ENCODE measurements at regions of chr2 and their contacts with region 1.

Region 1: DNA sequence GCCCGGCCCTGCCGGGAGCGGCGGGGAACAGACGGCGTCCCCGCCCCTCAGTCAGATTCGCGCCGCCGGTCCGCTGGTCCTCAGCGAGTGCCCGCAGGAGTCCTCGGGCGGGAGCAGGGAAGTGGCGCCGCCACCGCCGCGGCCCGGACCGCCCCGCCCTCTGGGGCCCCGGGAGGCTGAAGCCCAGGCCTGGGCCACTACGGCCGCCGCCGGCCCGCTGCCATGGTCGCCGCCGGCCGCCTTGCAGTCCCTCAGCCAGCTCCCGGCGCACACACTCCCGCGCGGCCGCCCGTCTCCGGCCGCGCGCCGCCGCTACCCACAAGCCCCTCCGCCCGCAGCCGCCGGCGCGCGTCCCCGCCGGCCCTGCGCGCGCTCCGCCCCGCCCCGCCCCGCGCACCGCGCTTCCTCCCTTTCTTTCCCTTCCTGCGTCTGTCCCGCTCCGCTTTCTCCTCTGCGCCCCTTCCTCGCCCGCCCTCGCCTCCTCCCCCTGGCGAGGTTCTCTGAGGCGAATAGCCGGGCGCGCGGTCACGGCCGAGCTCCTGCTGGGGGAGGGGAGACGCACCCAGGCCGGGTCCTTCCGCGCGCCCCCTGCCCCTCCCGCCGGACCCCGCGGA is at the start of gene ROCK2:
- DNase-seq: peak; percentile 48 to 87
- H3K4me3 ChIP-seq: peak within 1 kb of the TSS; percentile 65
- H3K27ac ChIP-seq: peak within 1 kb of the TSS; percentile 98
- H3K4me1 ChIP-seq: peaks cover 50% of the 10 kb centered on the region
- H3K27me3 ChIP-seq: no peaks in the 10 kb centered on the region
- CTCF ChIP-seq: no peak
- total RNA-seq, gene ROCK2: 28.5 and 38.0 TPM in 2 replicates

Region 2: GRCh38 chr2:10846110-10846861 is 498.2 kb before region 1 on chr2:
- CTCF ChIA-PET with region 1: interaction called, 13 read pairs
- POLR2A ChIA-PET with region 1: no interaction called
- intact Hi-C with region 1: no loop called
- DNase-seq: no peak
- H3K4me3 ChIP-seq: no peak overlapping the region
- H3K27ac ChIP-seq: no peak overlapping the region
- H3K4me1 ChIP-seq: peaks cover 9% of the 10 kb centered on the region; the same call in 1 of the 2 replicates
- H3K27me3 ChIP-seq: no peaks in the 10 kb centered on the region
- CTCF ChIP-seq: no peak

Region 3: DNA sequence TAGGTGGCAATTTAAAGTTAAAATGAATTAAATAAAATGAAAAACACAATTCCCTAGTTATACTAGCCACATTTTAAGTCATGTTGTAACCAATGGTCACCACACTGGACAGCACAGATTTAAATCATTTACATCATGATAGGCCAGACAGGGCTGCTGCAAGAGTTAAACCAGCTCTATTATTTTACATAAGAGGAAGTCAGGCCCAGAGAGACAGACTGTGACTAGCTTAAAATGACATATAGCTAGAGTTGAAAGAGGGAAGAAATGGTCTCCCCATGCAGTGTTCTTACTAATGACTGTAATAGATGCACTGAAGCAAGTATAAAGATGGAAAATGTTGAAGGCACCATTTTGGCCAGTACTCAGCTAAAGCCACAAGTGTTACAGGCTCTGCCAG is 119.6 kb before region 1 on chr2:
- CTCF ChIA-PET with region 1: no interaction called
- POLR2A ChIA-PET with region 1: interaction called, 27 read pairs
- intact Hi-C with region 1: no loop called
- DNase-seq: no peak
- H3K4me3 ChIP-seq: no peak overlapping the region
- H3K27ac ChIP-seq: no peak overlapping the region
- H3K4me1 ChIP-seq: no peaks in the 10 kb centered on the region
- H3K27me3 ChIP-seq: no peaks in the 10 kb centered on the region
- CTCF ChIP-seq: no peak

Region 4: DNA sequence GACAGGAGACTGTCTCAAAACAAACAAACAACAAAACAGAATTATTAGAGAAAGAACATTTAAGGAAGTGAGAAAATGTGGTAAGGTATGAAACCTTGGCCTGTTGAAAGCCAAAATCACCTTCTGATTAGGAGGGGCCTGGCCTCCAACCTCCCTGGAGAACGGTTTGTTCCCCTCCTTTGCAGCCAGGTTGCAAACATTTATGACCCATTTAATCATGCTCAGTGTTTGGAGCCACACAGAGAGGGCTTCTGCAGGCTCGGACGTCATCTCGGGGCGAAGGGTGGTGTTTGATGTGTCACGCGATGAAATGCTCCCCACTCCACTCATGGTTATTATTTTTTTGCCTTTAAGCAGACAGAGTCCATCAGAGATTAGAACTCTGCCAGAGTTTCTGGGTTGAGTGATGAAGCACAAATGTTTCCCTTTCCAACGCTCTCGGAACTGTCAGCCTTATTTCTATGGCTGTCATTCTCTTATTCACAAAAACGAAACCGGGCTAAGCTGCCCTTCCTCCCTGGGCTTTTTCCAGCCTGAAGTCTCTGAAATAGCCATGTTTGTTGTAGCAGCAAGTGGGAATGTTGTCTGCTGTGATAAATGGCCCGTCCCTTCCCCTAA is 33.6 kb after region 1 on chr2:
- CTCF ChIA-PET with region 1: interaction called, 4 read pairs
- POLR2A ChIA-PET with region 1: interaction called, 10 read pairs
- intact Hi-C with region 1: loop called (anchors 1 kb)
- DNase-seq: no peak
- H3K4me3 ChIP-seq: no peak overlapping the region
- H3K27ac ChIP-seq: no peak overlapping the region
- H3K4me1 ChIP-seq: peaks cover 15% of the 10 kb centered on the region
- H3K27me3 ChIP-seq: no peaks in the 10 kb centered on the region
- CTCF ChIP-seq: no peak

Region 5: DNA sequence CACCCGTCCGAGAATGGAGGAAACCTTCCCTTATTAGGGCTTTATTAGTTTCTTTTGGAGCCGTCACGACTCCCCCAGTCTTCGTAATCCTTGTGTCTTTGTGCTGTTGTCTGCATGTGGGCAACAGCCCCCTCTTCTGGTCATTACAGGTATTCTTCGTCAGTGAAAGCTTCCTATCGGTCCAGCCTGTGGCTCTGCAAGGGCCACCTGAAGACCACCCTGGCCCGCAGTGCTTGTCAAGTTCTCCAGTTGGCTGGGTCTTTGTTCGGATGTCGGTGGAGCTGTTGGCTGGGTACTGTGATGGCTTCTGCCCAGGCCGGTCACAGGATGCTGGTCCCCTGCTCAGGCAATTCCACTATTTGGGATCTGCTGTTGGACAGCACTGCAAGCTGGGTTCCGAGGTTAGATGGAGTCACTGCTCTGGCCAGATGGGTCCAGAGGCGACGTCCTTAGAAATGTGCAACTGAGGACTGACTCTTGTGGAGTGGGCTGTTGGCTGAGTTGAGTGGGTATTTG is 102.3 kb after region 1 on chr2:
- CTCF ChIA-PET with region 1: no interaction called
- POLR2A ChIA-PET with region 1: no interaction called
- intact Hi-C with region 1: loop called (anchors 5 kb)
- DNase-seq: peak in 1 of 2 experiments; percentile 23
- H3K4me3 ChIP-seq: no peak overlapping the region
- H3K27ac ChIP-seq: no peak overlapping the region
- H3K4me1 ChIP-seq: no peaks in the 10 kb centered on the region
- H3K27me3 ChIP-seq: no peaks in the 10 kb centered on the region
- CTCF ChIP-seq: peak; percentile 92

Region 6: DNA sequence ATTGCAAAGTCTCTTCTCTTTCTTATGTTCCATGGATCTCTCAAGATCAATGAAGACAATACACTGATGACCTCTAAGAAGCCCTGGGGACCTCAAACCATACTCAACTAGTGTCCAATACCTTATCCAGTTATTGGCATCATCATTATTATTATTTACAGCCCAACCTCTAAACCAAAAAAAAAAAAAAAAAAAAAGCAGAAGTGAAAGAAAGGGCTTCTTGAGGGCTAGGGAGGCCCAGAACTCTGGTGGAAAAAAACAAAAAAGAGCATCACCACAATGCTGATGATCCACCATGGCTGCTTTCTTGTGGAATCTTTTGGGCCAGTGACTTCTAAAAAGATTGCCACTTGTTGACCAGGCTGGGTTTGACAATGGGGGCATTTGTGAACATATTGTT is 726.9 kb after region 1 on chr2:
- CTCF ChIA-PET with region 1: no interaction called
- POLR2A ChIA-PET with region 1: no interaction called
- intact Hi-C with region 1: no loop called
- DNase-seq: no peak
- H3K4me3 ChIP-seq: no peak overlapping the region
- H3K27ac ChIP-seq: no peak overlapping the region
- H3K4me1 ChIP-seq: no peaks in the 10 kb centered on the region
- H3K27me3 ChIP-seq: no peaks in the 10 kb centered on the region
- CTCF ChIP-seq: no peak

Measured in PC-9 (cell line).